CD8-positive, alpha-beta T cell (primary cell): ENCODE measurements at regions of chr12 and their contacts with region 1.

Region 1: GRCh38 chr12:108618079-108618952 is 15.4 kb downstream of the SELPLG start:
- DNase-seq: peak; percentile 53 to 87 (median 78)
- ATAC-seq: peak; percentile 35
- H3K4me3 ChIP-seq: no peak overlapping the region
- H3K4me3 Mint-ChIP-seq: no peak overlapping the region
- H3K27ac ChIP-seq: peak overlapping the region in 1 of 2 experiments; percentile 71
- H3K27ac Mint-ChIP-seq: peak overlapping the region; percentile 95
- H3K4me1 ChIP-seq: peaks cover 45% of the 10 kb centered on the region
- H3K4me1 Mint-ChIP-seq: peaks cover 61% of the 10 kb centered on the region
- H3K27me3 ChIP-seq: no peaks in the 10 kb centered on the region
- H3K27me3 Mint-ChIP-seq: no peaks in the 10 kb centered on the region
- CTCF ChIP-seq: peak; percentile 96

Region 2: DNA sequence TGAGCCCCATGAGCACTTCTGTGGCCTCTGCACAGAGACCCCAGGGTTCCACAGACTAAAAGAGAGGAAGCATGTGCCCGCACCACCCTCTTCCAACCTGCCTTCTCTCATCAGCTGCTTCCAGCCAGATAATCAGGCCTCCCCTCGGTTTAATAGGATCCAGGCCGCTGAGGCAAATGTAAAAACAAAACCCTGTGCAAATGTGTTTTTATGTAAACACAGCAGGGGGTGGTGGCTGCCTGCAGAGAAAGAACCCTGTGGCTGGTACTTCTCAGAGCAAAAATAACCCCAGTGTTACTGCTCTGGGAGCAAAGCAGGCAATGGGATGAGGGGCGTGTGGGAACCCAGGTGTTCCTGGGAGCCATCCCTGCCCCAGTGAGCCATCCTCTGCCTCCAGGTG is 443.0 kb before region 1 on chr12:
- CTCF ChIA-PET with region 1: no interaction called
- POLR2A ChIA-PET with region 1: no interaction called
- intact Hi-C with region 1: no loop called
- DNase-seq: no peak
- ATAC-seq: no peak
- H3K4me3 ChIP-seq: no peak overlapping the region
- H3K4me3 Mint-ChIP-seq: no peak overlapping the region
- H3K27ac ChIP-seq: no peak overlapping the region
- H3K27ac Mint-ChIP-seq: no peak overlapping the region
- H3K4me1 ChIP-seq: no peaks in the 10 kb centered on the region
- H3K4me1 Mint-ChIP-seq: no peaks in the 10 kb centered on the region
- H3K27me3 ChIP-seq: no peaks in the 10 kb centered on the region
- H3K27me3 Mint-ChIP-seq: peaks cover 9% of the 10 kb centered on the region
- CTCF ChIP-seq: no peak

Region 3: GRCh38 chr12:108576660-108577234 is 41.6 kb before region 1 on chr12:
- CTCF ChIA-PET with region 1: interaction called, 353 read pairs
- POLR2A ChIA-PET with region 1: interaction called, 4 read pairs
- intact Hi-C with region 1: no loop called
- DNase-seq: no peak
- ATAC-seq: no peak
- H3K4me3 ChIP-seq: no peak overlapping the region
- H3K4me3 Mint-ChIP-seq: no peak overlapping the region
- H3K27ac ChIP-seq: no peak overlapping the region
- H3K27ac Mint-ChIP-seq: no peak overlapping the region
- H3K4me1 ChIP-seq: peaks cover 15% of the 10 kb centered on the region
- H3K4me1 Mint-ChIP-seq: peaks cover 47% of the 10 kb centered on the region
- H3K27me3 ChIP-seq: no peaks in the 10 kb centered on the region
- H3K27me3 Mint-ChIP-seq: no peaks in the 10 kb centered on the region
- CTCF ChIP-seq: no peak

Region 4: GRCh38 chr12:108633534-108634248 is 15.4 kb after region 1 on chr12 and contains the start of gene SELPLG:
- CTCF ChIA-PET with region 1: interaction called, 281 read pairs
- POLR2A ChIA-PET with region 1: interaction called, 28 read pairs
- intact Hi-C with region 1: loop called (anchors 1 kb)
- DNase-seq: peak; percentile 77 to 97 (median 88)
- ATAC-seq: peak; percentile 60
- H3K4me3 ChIP-seq: peak within 1 kb of the TSS; percentile 71 to 95
- H3K4me3 Mint-ChIP-seq: peak within 1 kb of the TSS; percentile 100
- H3K27ac ChIP-seq: peak within 1 kb of the TSS; percentile 91 to 92
- H3K27ac Mint-ChIP-seq: peak within 1 kb of the TSS; percentile 100
- H3K4me1 ChIP-seq: peaks cover 73% of the 10 kb centered on the region
- H3K4me1 Mint-ChIP-seq: peaks cover 71% of the 10 kb centered on the region
- H3K27me3 ChIP-seq: no peaks in the 10 kb centered on the region
- H3K27me3 Mint-ChIP-seq: no peaks in the 10 kb centered on the region
- CTCF ChIP-seq: peak; percentile 23
- total RNA-seq, gene SELPLG: 30.4 to 32.3 TPM

Region 5: DNA sequence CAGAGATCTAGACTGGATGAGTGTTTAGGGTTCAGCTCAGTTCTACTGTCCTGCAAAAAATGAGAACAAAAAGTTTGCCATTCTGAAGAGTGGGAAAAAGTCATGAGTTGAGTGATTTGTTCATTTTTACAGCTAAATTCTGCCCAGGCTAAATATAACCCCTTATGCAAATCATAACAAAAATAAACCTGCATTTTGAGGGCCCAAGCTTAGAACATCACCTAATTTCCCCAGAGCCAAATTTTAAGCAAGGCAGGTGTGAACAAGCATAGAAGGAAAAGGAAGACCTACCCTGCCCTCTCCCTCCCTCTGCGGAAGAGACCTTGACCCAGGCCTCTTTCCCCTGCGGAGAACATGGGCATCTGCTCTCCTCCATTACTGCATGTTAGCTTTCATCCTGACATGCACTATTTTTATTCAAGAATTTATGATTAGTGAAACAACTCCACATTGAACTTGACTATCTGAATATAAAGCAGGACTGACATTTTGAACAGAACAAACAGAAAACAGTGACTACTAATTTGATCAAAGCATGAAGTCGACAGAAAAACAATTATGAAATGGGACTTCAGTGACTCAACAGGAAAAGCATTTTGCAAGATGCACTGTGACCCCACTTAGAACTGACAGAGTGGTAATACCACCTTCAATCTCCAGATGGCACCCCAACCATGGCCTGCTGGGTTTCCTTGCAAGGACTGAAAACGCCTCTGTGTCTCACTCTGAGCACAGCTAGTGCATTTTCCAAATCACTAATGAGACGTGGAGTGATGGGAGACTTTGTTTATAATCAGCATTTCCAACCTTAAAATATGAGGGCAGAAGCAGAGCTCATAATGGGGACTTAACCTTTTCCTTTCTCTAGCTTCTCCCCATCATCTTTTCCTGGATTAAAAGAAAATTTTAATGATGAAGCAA is 46.3 kb after region 1 on chr12:
- CTCF ChIA-PET with region 1: interaction called, 84 read pairs
- POLR2A ChIA-PET with region 1: interaction called, 9 read pairs
- intact Hi-C with region 1: loop called (anchors 1 to 5 kb)
- DNase-seq: peak; percentile 70 to 89 (median 83)
- ATAC-seq: peak; percentile 100
- H3K4me3 ChIP-seq: no peak overlapping the region
- H3K4me3 Mint-ChIP-seq: no peak overlapping the region
- H3K27ac ChIP-seq: peak overlapping the region in 1 of 2 experiments; percentile 31
- H3K27ac Mint-ChIP-seq: peak overlapping the region; percentile 79
- H3K4me1 ChIP-seq: peaks cover 5% of the 10 kb centered on the region
- H3K4me1 Mint-ChIP-seq: peaks cover 15% of the 10 kb centered on the region
- H3K27me3 ChIP-seq: no peaks in the 10 kb centered on the region
- H3K27me3 Mint-ChIP-seq: no peaks in the 10 kb centered on the region
- CTCF ChIP-seq: peak; percentile 92

Region 6: DNA sequence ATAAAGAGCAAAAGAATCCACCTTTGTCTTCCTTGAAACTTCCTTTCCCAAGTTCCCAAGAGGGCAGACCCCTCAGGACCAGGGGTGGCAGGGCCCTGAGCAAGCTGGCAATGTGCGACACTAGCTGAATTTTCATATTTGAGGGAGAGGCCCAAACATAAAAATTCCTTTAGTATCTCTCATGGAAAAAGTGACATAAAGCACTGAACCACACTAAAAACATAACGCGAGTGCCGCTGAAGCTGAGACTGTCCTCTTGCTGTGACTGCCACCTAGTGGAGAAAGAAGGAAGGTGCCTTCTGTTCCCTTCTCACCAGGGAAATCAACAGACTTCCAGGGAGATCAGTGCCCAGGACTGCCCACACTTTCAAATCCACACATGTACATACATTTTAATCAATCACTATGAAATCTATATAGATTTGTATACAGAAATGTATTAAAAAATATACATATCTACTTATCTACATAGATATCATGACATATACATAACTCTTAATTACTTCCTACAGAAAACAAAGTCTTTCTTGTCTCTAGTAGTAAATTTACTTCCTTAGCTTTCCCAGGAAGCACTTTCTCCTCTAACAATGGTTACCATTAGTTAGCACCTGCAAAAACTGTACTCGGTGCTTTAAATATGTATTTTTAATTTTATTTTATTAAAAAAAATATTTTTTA is 185.3 kb after region 1 on chr12:
- CTCF ChIA-PET with region 1: interaction called, 43 read pairs
- POLR2A ChIA-PET with region 1: interaction called, 5 read pairs
- intact Hi-C with region 1: no loop called
- DNase-seq: peak; percentile 44 to 84 (median 68)
- ATAC-seq: peak; percentile 95
- H3K4me3 ChIP-seq: no peak overlapping the region
- H3K4me3 Mint-ChIP-seq: no peak overlapping the region
- H3K27ac ChIP-seq: no peak overlapping the region
- H3K27ac Mint-ChIP-seq: peak overlapping the region; percentile 14
- H3K4me1 ChIP-seq: no peaks in the 10 kb centered on the region
- H3K4me1 Mint-ChIP-seq: peaks cover 4% of the 10 kb centered on the region
- H3K27me3 ChIP-seq: no peaks in the 10 kb centered on the region
- H3K27me3 Mint-ChIP-seq: no peaks in the 10 kb centered on the region
- CTCF ChIP-seq: peak; percentile 94

Region 7: DNA sequence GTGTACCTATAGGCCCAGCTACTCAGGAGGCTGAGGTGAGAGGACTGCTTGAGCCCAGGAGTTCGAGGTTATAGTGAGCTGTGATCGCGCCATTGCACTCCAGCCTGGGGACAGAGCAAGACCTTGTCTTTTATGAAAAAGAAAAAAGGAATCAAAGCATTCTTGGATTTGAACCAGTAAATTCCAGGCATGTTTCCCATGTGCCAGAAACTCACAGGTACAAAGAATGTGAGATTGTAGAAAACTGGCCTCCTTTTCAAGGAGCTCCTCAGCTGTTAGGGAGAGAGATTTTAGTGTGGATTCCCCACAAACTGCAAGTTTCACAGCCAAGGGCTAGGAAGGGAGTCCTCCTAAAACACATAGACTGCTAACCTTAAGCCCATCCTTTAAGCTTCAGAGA is 595.8 kb after region 1 on chr12:
- CTCF ChIA-PET with region 1: no interaction called
- POLR2A ChIA-PET with region 1: no interaction called
- intact Hi-C with region 1: no loop called
- DNase-seq: no peak
- ATAC-seq: no peak
- H3K4me3 ChIP-seq: no peak overlapping the region
- H3K4me3 Mint-ChIP-seq: no peak overlapping the region
- H3K27ac ChIP-seq: no peak overlapping the region
- H3K27ac Mint-ChIP-seq: no peak overlapping the region
- H3K4me1 ChIP-seq: no peaks in the 10 kb centered on the region
- H3K4me1 Mint-ChIP-seq: no peaks in the 10 kb centered on the region
- H3K27me3 ChIP-seq: no peaks in the 10 kb centered on the region
- H3K27me3 Mint-ChIP-seq: no peaks in the 10 kb centered on the region
- CTCF ChIP-seq: no peak